Heart right ventricle (tissue), 16 donors: ENCODE measurements at regions of chr7 and their contacts with region 1.

Region 1: GRCh38 chr7:84714765-84715164 is 472.1 kb downstream of the SEMA3D start:
- DNase-seq: no peak
- ATAC-seq: no peak
- H3K4me3 ChIP-seq: no peak overlapping the region
- H3K27ac ChIP-seq: no peak overlapping the region
- H3K4me1 ChIP-seq: no peaks in the 10 kb centered on the region
- H3K27me3 ChIP-seq: no peaks in the 10 kb centered on the region
- CTCF ChIP-seq: no peak

Region 2: GRCh38 chr7:84614821-84615505 is 99.8 kb before region 1 on chr7:
- intact Hi-C with region 1: loop called in 1 of 10 experiments (anchors 5 kb)
- DNase-seq: no peak
- ATAC-seq: no peak
- H3K4me3 ChIP-seq: no peak overlapping the region
- H3K27ac ChIP-seq: no peak overlapping the region
- H3K4me1 ChIP-seq: no peaks in the 10 kb centered on the region
- H3K27me3 ChIP-seq: no peaks in the 10 kb centered on the region
- CTCF ChIP-seq: peak in 2 of 9 donors; percentile 18 to 30

Region 3: DNA sequence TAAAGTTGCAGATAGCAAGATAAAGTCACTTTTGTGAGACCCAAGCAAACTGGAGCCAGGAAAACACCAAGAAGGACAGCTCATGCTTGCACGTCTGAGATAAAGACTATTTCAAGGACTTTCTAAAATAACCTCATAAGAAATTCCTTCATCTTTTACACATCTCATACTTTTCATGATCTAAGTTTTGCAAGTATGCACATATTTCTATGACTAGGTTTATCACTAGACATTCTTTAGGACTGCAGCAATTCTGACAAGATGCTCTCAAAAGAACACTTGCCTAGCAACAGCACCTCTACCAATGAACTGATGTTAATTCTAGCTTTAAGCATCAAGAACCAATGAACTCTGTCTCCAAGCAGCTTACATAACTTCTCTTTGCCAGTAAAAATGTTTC is 14.5 kb after region 1 on chr7:
- intact Hi-C with region 1: loop called in 1 of 10 experiments (anchors 1 kb)
- DNase-seq: no peak
- ATAC-seq: no peak
- H3K4me3 ChIP-seq: no peak overlapping the region
- H3K27ac ChIP-seq: no peak overlapping the region
- H3K4me1 ChIP-seq: no peaks in the 10 kb centered on the region
- H3K27me3 ChIP-seq: no peaks in the 10 kb centered on the region
- CTCF ChIP-seq: no peak